ENCODE measurements at regions of chr17 and their contacts with region 1.

Region 1: DNA sequence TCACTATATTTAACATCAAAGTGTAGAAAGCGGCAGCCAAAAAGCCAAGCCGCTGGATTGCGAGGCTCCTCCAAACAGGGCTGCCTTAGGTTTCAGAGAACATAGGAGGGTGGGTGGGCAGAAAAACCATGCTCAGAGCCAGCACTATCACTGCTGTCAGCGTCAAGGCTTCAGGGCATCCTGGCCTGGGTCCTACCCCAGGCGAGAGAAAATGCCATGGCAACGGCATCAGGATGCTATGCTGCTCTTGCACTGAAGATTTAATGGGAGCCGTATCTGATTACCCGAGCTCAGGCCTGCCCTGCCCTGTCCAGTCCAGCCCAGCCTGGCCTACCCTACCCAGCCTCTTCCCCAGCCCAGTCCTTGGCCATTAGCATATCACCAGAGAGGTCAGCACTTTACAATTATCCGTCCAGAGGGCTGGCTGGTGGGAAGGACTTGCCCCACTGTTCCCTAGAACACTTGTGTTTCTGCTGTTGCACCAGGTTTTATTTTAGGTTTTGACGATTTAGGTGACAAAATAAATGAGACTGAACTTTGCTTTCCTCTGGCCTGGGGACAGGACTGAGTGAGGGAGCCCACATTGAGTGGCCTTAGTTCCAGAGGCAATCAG is 61.1 kb downstream of the TOM1L2 start:
- DNase-seq: peak; percentile 57

Region 2: GRCh38 chr17:16199093-16199492 is 1712.0 kb before region 1 on chr17:
- intact Hi-C with region 1: no loop called
- DNase-seq: no peak

Region 3: DNA sequence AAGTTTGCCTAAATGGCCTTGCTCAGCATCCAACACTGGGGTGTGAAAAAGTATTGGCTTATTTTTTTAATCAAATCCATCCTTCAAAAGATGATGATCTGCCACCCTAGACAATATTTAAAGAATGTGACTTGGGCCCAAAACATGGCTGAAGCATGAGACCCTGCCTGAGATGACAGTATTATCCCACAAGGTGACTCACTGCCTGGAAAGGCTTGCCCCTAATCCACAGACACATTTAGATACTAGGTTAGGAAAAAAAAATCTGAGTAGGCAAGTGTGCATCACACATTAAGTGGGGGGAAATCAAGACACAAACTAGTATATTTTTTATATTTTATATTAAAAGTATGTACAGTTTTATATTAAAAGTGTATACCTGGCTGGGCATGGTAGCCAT is 22.7 kb after region 1 on chr17:
- intact Hi-C with region 1: loop called in 1 of 2 experiments (anchors 1 kb)
- DNase-seq: no peak

Region 4: DNA sequence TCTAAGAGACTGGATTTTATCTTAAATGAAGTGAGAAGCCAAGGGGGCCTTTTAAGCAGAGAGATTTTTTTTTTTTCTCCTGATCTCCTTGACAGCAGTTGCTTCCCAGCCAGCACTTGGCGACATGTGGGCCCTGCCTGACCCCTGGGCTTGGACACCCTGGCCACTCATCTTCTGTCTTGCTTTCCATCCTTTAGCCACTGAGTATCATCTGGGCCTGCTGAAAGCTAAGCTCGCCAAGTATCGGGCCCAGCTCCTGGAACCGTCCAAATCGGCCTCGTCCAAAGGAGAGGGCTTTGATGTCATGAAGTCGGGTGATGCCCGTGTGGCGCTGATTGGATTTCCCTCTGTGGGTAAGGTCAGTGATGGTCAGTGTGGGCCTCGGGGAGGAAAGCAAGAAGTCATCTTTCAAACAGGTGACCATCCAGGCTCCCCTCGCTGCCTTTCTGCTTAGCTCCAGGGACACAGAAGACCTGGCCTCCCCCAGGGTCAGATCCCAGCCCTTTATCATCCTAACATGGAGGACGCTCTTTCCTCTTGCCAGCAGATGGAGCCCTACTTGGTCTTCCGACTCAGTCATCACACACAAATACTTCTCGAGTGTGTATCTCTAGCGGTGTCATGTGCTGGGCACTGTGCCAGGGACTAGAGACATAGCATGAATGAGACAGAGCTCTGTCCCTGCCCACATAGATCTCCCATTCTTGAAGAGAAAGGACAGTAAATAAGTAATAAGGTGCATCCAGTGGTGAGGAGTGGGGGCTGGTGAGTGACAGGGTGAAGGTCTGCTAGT is 182.7 kb after region 1 on chr17:
- intact Hi-C with region 1: no loop called
- DNase-seq: no peak

Measured in posterior vena cava (tissue), 2 donors.